IMR-90 (cell line): ENCODE measurements at regions of chr19 and their contacts with region 1.

Region 1: DNA sequence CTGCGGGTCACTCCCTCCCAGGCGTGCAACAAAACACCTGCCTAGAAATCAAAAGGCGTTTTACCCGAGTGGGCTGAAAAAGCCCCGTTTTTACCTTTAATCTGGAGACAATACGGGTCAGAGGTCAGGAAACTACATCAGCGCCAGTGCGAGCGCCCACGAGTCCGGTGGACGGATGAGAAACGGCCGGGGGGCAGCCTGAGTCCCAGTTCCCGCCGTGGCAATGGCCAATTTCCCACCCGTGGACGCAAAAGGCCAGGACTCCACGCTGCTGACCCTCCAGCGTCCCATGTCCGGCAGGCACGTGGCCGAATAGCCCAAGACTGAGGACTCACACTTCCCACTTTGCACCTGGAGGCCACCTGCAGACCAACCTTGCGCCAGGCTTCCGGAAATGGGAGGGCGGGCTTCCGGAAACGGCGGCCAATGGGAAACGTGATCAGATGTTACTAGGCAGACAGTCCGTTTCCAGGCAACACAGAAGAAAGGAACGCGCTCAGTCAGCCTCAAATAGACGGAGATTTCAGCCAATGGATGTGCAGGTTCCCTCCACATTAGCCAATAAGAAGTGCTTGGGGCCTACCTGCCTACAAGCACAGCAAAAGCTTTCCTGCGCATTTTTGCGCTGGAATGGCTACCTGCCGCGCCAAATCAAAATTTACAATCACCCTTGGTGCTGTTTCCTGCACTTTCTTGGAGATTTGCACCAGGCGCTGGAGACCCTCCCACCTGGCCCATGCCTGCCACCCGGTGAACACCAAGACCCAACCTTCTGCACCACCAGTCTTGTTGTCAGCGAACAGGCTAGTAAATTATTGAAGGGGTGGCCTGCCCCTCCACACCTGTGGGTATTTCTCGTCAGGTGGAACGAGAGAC is 47.4 kb downstream of the ZFP14 start:
- DNase-seq: peak; percentile 94
- ATAC-seq: peak; percentile 100
- H3K4me3 ChIP-seq: peak overlapping the region; percentile 59
- H3K27ac ChIP-seq: no peak overlapping the region; the same call in 1 of the 2 replicates
- H3K4me1 ChIP-seq: no peaks in the 10 kb centered on the region
- H3K27me3 ChIP-seq: no peaks in the 10 kb centered on the region
- CTCF ChIP-seq: no peak
- POLR2A ChIP-seq: no peak
- RAD21 ChIP-seq: no peak

Region 2: DNA sequence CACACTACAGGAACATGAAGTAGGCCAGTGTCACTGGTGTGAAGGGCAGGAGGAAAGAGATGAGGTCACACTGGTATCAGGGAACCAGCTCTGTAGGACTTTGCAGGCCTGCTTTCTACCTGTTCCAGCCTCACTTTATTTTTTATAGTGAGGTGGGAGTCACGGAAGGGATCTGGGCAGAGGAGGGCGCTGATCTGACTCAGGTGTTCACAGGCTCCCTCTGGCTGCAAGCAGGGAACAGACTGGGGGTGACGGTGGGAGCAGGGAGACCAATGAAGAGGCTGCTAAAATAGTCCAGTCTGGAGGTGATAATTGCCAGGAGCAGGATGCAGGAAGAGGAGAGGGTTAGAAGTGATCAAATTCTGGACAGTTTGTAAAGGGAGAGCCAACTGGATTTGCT is 280.4 kb before region 1 on chr19:
- CTCF ChIA-PET with region 1: no interaction called
- POLR2A ChIA-PET with region 1: no interaction called
- dilution Hi-C with region 1: no loop called
- in situ Hi-C with region 1: no loop called
- intact Hi-C with region 1: no loop called
- DNase-seq: no peak
- ATAC-seq: no peak
- H3K4me3 ChIP-seq: no peak overlapping the region
- H3K27ac ChIP-seq: no peak overlapping the region
- H3K4me1 ChIP-seq: no peaks in the 10 kb centered on the region; the same call in 1 of the 2 replicates
- H3K27me3 ChIP-seq: no peaks in the 10 kb centered on the region
- CTCF ChIP-seq: 0 out of 2 replicates have a peak, but pooled peaks have one; percentile 23
- POLR2A ChIP-seq: no peak
- RAD21 ChIP-seq: no peak

Region 3: DNA sequence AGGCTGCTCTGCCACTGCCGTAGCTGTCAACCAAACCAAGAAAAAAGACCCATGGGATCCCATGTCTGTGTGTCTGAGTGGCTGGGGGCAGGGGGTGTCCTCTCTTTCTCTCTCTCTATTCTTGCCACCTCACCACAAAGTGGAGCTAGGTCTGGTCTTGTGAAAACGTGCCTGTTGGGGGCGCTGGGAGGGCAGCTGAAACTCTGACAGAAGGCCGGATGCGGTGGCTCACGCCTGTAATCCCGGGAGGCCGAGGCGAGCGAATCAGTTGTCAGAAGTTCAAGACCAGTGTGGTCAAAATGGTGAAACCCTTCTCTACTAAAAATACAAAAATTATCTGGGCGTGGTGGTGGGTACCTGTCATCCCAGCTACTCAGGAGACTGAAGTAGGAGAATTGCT is 87.5 kb before region 1 on chr19:
- CTCF ChIA-PET with region 1: interaction called, 3 read pairs
- POLR2A ChIA-PET with region 1: no interaction called
- dilution Hi-C with region 1: no loop called
- in situ Hi-C with region 1: loop called (anchors 5 kb)
- intact Hi-C with region 1: no loop called
- DNase-seq: no peak
- ATAC-seq: no peak
- H3K4me3 ChIP-seq: no peak overlapping the region
- H3K27ac ChIP-seq: no peak overlapping the region
- H3K4me1 ChIP-seq: no peaks in the 10 kb centered on the region
- H3K27me3 ChIP-seq: peaks cover 7% of the 10 kb centered on the region
- CTCF ChIP-seq: no peak
- POLR2A ChIP-seq: no peak
- RAD21 ChIP-seq: no peak

Region 4: DNA sequence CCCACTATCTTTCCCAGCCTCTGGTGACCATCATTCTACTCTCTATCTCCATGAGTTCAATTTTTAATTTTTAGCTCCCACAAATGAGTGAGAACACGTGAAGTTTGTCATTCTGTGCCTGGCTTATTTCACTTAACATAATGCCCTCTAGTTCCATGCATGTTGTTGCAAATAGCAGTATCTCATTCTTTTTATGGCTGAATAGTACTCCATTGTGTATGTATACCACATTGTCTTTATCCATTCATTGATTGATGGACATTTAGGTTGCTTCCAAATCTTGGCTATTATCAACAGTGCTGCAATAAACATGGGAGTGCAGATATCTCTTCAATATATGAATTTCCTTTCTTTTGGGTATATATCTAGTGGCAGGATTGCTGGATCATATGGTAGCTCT is 109.7 kb after region 1 on chr19:
- CTCF ChIA-PET with region 1: no interaction called
- POLR2A ChIA-PET with region 1: no interaction called
- dilution Hi-C with region 1: no loop called
- in situ Hi-C with region 1: no loop called
- intact Hi-C with region 1: no loop called
- DNase-seq: no peak
- ATAC-seq: no peak
- H3K4me3 ChIP-seq: no peak overlapping the region
- H3K27ac ChIP-seq: no peak overlapping the region
- H3K4me1 ChIP-seq: no peaks in the 10 kb centered on the region
- H3K27me3 ChIP-seq: no peaks in the 10 kb centered on the region
- CTCF ChIP-seq: no peak
- POLR2A ChIP-seq: no peak
- RAD21 ChIP-seq: no peak